Cardiac septum (tissue), 1 donor: ENCODE measurements at regions of chr2 and their contacts with region 1.

Region 1: DNA sequence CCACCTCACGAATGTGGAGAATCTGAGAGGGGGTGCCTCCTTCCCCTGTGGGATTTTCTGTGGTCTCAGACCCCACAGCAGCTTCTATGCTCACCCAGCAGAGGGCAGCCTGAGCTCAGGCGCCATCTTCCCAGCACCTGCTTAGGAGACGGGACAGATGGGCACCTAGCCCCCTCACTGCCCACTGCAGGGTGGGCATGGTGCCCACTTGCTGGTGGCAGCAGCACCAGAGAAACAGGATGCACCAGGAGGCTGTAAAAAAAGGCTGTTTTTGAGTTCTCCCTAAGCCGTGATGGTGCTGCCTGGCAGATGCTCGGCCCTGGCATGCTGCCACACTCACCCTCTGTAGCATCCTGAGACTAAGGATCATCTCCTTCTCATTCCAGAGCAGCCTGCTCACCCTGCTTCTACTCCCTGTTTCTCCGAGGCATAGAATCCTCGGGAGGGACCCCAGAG is 19.1 kb upstream of the SLC20A1 start:
- DNase-seq: peak; percentile 84

Region 2: DNA sequence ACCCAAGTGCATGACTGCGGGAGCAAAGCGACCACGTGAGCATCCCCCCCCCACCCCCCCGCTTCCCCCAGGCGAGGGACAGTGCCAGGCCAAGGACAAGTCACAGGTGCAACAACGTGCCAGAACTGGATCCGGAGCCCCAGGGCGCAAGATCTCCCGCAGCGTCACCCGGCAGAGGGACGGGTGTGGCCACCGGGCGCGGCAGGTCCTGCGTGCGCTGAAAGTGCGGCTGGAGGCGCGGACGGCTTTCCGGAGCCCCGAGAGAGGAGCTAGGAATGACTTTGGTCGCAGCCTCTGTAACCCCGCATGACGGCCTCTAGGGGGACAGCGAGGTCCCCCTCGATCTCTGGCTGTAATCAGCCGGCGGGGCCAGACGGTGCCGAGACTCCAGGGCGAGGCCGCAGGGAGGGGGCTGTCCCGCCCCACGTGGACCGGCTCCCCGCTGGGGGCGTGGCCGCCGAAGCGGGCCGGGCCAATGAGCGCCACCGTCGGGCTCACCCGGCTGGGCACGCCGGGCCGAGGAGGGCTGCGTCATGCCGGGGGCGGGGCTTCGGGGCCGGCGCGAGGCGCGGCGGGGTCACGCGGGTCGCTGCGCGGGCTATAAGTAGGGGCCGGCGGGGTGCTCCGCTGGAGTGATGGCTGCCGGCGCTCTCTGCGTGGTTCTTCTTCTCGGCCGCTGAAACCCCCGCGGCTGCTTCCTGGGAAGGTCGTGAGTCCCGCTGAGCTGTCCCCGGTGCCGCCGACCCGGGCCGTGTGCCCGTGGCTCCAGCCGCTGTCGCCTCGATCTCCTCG is 18.9 kb after region 1 on chr2 and contains the start of gene SLC20A1:
- intact Hi-C with region 1: loop called (anchors 1 kb)
- DNase-seq: peak; percentile 99
- total RNA-seq, gene SLC20A1: 26.1 TPM

Region 3: GRCh38 chr2:112690853-112691401 is 64.3 kb after region 1 on chr2:
- intact Hi-C with region 1: loop called (anchors 2 kb)
- DNase-seq: peak; percentile 86

Region 4: GRCh38 chr2:112726497-112727190 is 100.0 kb after region 1 on chr2:
- intact Hi-C with region 1: loop called (anchors 1 kb)
- DNase-seq: peak; percentile 95